IMR-90 (cell line): ENCODE measurements at regions of chr9 and their contacts with region 1.

Region 1: GRCh38 chr9:112074250-112075008 is 100.7 kb downstream of the SUSD1 start:
- DNase-seq: peak; percentile 98
- ATAC-seq: peak; percentile 78
- H3K4me3 ChIP-seq: no peak overlapping the region
- H3K27ac ChIP-seq: peak overlapping the region; percentile 99
- H3K4me1 ChIP-seq: peaks cover 19% of the 10 kb centered on the region
- H3K27me3 ChIP-seq: no peaks in the 10 kb centered on the region
- CTCF ChIP-seq: peak; percentile 98
- POLR2A ChIP-seq: peak; percentile 61
- RAD21 ChIP-seq: peak; percentile 98

Region 2: DNA sequence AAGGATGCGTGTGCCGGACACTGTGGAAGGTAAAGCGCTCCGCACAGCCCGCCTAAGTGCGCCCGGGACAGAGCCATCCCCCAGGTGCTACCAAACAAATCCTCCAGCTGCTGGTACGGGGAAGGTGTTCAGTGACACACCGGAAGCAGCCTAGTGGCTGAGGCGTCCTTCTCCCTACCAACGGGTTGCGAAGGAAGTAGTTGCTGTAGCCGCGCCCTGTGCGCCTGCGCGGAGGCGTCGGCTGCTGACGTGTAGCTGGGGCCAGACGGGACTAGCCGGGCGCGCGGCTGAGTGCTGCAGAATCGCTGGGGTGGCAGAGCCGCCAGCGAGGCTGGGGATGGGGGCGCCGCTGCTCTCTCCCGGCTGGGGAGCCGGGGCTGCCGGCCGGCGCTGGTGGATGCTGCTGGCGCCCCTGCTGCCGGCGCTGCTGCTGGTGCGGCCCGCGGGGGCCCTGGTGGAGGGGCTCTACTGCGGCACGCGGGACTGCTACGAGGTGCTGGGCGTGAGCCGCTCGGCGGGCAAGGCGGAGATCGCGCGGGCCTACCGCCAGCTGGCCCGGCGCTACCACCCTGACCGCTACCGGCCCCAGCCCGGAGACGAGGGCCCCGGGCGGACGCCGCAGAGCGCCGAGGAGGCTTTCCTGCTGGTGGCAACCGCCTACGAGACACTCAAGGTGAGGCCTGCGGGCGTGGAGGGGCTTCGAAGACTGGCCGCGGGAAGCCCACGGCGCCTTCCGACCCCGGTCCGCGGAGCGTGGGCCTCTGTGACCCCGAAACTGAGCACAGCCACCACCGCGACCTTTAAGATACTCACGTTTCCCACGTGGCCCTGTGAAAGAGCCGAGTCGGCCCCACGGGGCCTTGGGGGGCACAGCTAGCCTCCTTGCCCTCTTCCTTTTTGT is 443.1 kb before region 1 on chr9 and contains the start of gene DNAJC25:
- CTCF ChIA-PET with region 1: no interaction called
- POLR2A ChIA-PET with region 1: no interaction called
- dilution Hi-C with region 1: no loop called
- in situ Hi-C with region 1: no loop called
- intact Hi-C with region 1: loop called (anchors 10 kb)
- DNase-seq: peak; percentile 99
- ATAC-seq: peak; percentile 98
- H3K4me3 ChIP-seq: peak within 1 kb of the TSS; percentile 70
- H3K27ac ChIP-seq: peak within 1 kb of the TSS; percentile 82
- H3K4me1 ChIP-seq: peaks cover 1% of the 10 kb centered on the region; the same call in 1 of the 2 replicates
- H3K27me3 ChIP-seq: no peaks in the 10 kb centered on the region
- CTCF ChIP-seq: no peak
- POLR2A ChIP-seq: peak; percentile 100
- RAD21 ChIP-seq: no peak
- total RNA-seq, gene DNAJC25: 3.2 and 5.6 TPM in 2 replicates

Region 3: GRCh38 chr9:111896353-111896958 is 178.0 kb before region 1 on chr9 and contains the start of gene UGCG:
- CTCF ChIA-PET with region 1: interaction called, 4 read pairs
- POLR2A ChIA-PET with region 1: interaction called, 10 read pairs
- dilution Hi-C with region 1: no loop called
- in situ Hi-C with region 1: loop called (anchors 5 kb)
- intact Hi-C with region 1: loop called (anchors 1 kb)
- DNase-seq: peak; percentile 90
- ATAC-seq: peak; percentile 90
- H3K4me3 ChIP-seq: peak within 1 kb of the TSS; percentile 98
- H3K27ac ChIP-seq: peak within 1 kb of the TSS; percentile 96
- H3K4me1 ChIP-seq: peaks cover 14% of the 10 kb centered on the region
- H3K27me3 ChIP-seq: no peaks in the 10 kb centered on the region
- CTCF ChIP-seq: no peak
- POLR2A ChIP-seq: peak; percentile 94
- RAD21 ChIP-seq: peak; percentile 2; the same call in 1 of the 2 replicates
- total RNA-seq, gene UGCG: 104 and 234 TPM in 2 replicates

Region 4: GRCh38 chr9:111945216-111945615 is 129.2 kb before region 1 on chr9:
- CTCF ChIA-PET with region 1: interaction called, 4 read pairs
- POLR2A ChIA-PET with region 1: no interaction called
- dilution Hi-C with region 1: no loop called
- in situ Hi-C with region 1: loop called (anchors 10 kb)
- intact Hi-C with region 1: loop called (anchors 5 kb)
- DNase-seq: peak; percentile 83
- ATAC-seq: 0 out of 2 replicates have a peak, but pooled peaks have one; percentile 15
- H3K4me3 ChIP-seq: no peak overlapping the region
- H3K27ac ChIP-seq: no peak overlapping the region
- H3K4me1 ChIP-seq: peaks cover 10% of the 10 kb centered on the region
- H3K27me3 ChIP-seq: no peaks in the 10 kb centered on the region
- CTCF ChIP-seq: no peak
- POLR2A ChIP-seq: no peak
- RAD21 ChIP-seq: no peak

Region 5: GRCh38 chr9:112012026-112012902 is 62.2 kb before region 1 on chr9:
- CTCF ChIA-PET with region 1: interaction called, 4 read pairs
- POLR2A ChIA-PET with region 1: interaction called, 7 read pairs
- dilution Hi-C with region 1: no loop called
- in situ Hi-C with region 1: no loop called
- intact Hi-C with region 1: loop called (anchors 5 kb)
- DNase-seq: peak; percentile 95
- ATAC-seq: peak; percentile 87
- H3K4me3 ChIP-seq: no peak overlapping the region
- H3K27ac ChIP-seq: peak overlapping the region; percentile 97
- H3K4me1 ChIP-seq: peaks cover 24% of the 10 kb centered on the region
- H3K27me3 ChIP-seq: no peaks in the 10 kb centered on the region
- CTCF ChIP-seq: no peak
- POLR2A ChIP-seq: no peak
- RAD21 ChIP-seq: no peak; the same call in 1 of the 2 replicates

Region 6: GRCh38 chr9:112041536-112042243 is 32.7 kb before region 1 on chr9:
- CTCF ChIA-PET with region 1: interaction called, 4 read pairs
- POLR2A ChIA-PET with region 1: interaction called, 3 read pairs
- dilution Hi-C with region 1: no loop called
- in situ Hi-C with region 1: no loop called
- intact Hi-C with region 1: loop called (anchors 1 kb)
- DNase-seq: peak; percentile 100
- ATAC-seq: peak; percentile 81
- H3K4me3 ChIP-seq: no peak overlapping the region
- H3K27ac ChIP-seq: peak overlapping the region; percentile 93
- H3K4me1 ChIP-seq: peaks cover 35% of the 10 kb centered on the region
- H3K27me3 ChIP-seq: no peaks in the 10 kb centered on the region
- CTCF ChIP-seq: no peak
- POLR2A ChIP-seq: no peak
- RAD21 ChIP-seq: peak; percentile 38

Region 7: GRCh38 chr9:112061152-112061740 is 13.2 kb before region 1 on chr9:
- CTCF ChIA-PET with region 1: interaction called, 4 read pairs
- POLR2A ChIA-PET with region 1: interaction called, 11 read pairs
- dilution Hi-C with region 1: no loop called
- in situ Hi-C with region 1: no loop called
- intact Hi-C with region 1: no loop called
- DNase-seq: peak; percentile 99
- ATAC-seq: peak; percentile 73
- H3K4me3 ChIP-seq: no peak overlapping the region
- H3K27ac ChIP-seq: peak overlapping the region; percentile 97
- H3K4me1 ChIP-seq: peaks cover 26% of the 10 kb centered on the region
- H3K27me3 ChIP-seq: no peaks in the 10 kb centered on the region
- CTCF ChIP-seq: no peak
- POLR2A ChIP-seq: peak; percentile 48
- RAD21 ChIP-seq: peak; percentile 22

Region 8: GRCh38 chr9:112120439-112120925 is 46.1 kb after region 1 on chr9:
- CTCF ChIA-PET with region 1: no interaction called
- POLR2A ChIA-PET with region 1: no interaction called
- dilution Hi-C with region 1: no loop called
- in situ Hi-C with region 1: no loop called
- intact Hi-C with region 1: no loop called
- DNase-seq: no peak
- ATAC-seq: no peak
- H3K4me3 ChIP-seq: no peak overlapping the region
- H3K27ac ChIP-seq: no peak overlapping the region
- H3K4me1 ChIP-seq: 0 out of 2 replicates have a peak, but pooled peaks cover 2% of the 10 kb centered on the region
- H3K27me3 ChIP-seq: no peaks in the 10 kb centered on the region
- CTCF ChIP-seq: no peak
- POLR2A ChIP-seq: no peak
- RAD21 ChIP-seq: no peak

Region 9: GRCh38 chr9:112180387-112180881 is 106.0 kb after region 1 on chr9:
- CTCF ChIA-PET with region 1: no interaction called
- POLR2A ChIA-PET with region 1: no interaction called
- dilution Hi-C with region 1: no loop called
- in situ Hi-C with region 1: no loop called
- intact Hi-C with region 1: no loop called
- DNase-seq: no peak
- ATAC-seq: peak; percentile 34; the same call in 1 of the 2 replicates
- H3K4me3 ChIP-seq: no peak overlapping the region
- H3K27ac ChIP-seq: no peak overlapping the region
- H3K4me1 ChIP-seq: peaks cover 4% of the 10 kb centered on the region
- H3K27me3 ChIP-seq: peaks cover 4% of the 10 kb centered on the region; the same call in 1 of the 2 replicates
- CTCF ChIP-seq: no peak
- POLR2A ChIP-seq: no peak
- RAD21 ChIP-seq: no peak